ENCODE measurements at regions of chr9 and their contacts with region 1.

Region 1: GRCh38 chr9:27529316-27530278 is at the start of gene MOB3B:
- DNase-seq: peak; percentile 92
- ATAC-seq: peak; percentile 94
- total RNA-seq, gene MOB3B: 1.5 TPM

Region 2: GRCh38 chr9:27184556-27185351 is 344.8 kb before region 1 on chr9:
- intact Hi-C with region 1: no loop called
- DNase-seq: no peak
- ATAC-seq: no peak

Region 3: GRCh38 chr9:27333241-27334052 is 196.2 kb before region 1 on chr9:
- intact Hi-C with region 1: loop called (anchors 1 kb)
- DNase-seq: peak; percentile 60
- ATAC-seq: peak; percentile 96

Region 4: DNA sequence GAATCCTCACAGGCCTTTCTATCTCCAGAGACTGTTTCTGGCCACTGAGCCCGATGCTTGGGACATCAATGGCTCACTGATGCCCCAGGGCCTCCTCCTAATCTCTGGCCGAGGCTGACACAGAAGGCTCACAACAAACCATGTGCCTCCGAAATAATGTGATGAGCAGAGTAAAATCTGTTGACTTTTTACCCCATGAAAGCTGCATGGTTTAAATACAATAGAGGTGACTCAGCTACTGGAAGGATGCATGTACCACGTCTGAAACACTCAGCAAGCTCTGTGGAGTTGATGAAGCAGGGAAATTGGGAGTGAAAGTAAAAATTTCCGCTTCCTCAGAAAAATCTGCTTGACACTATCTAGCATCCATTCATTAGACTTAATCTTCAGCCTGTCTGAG is 121.6 kb before region 1 on chr9:
- intact Hi-C with region 1: loop called (anchors 10 kb)
- DNase-seq: no peak
- ATAC-seq: no peak

Region 5: GRCh38 chr9:27436234-27436633 is 93.4 kb before region 1 on chr9:
- intact Hi-C with region 1: loop called (anchors 10 kb)
- DNase-seq: no peak
- ATAC-seq: no peak

Region 6: DNA sequence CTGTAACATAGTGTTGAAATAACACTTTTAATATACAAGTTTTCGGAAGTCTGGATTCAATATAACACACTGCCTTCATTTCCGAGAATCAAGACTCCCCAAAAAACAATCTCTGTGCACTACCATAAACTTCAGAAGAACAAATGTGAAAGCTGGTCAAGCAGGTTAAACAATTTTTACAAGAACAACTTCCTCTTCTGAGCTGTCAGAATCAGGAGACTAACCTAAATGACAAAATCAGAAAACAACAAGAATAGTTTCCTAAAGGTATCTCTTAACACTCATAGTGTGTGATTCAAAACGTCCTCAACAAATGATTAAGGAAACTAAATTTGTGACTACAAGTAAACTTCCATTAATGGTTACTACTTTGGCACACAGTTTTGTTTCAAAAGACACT is 32.1 kb after region 1 on chr9:
- intact Hi-C with region 1: no loop called
- DNase-seq: no peak
- ATAC-seq: no peak

Region 7: GRCh38 chr9:27755846-27756245 is 226.2 kb after region 1 on chr9:
- intact Hi-C with region 1: no loop called
- DNase-seq: no peak
- ATAC-seq: no peak

Measured in Right ventricle myocardium superior (tissue), 1 donor.